ENCODE measurements at regions of chr13 and their contacts with region 1.

Region 1: GRCh38 chr13:46181840-46182490 is at the start of gene LCP1:
- DNase-seq: peak; percentile 69
- ATAC-seq: peak; percentile 73
- H3K4me3 Mint-ChIP-seq: peak within 1 kb of the TSS; percentile 98
- H3K27ac Mint-ChIP-seq: peak within 1 kb of the TSS; percentile 100
- H3K4me1 Mint-ChIP-seq: peaks cover 48% of the 10 kb centered on the region
- H3K27me3 Mint-ChIP-seq: no peaks in the 10 kb centered on the region
- total RNA-seq, gene LCP1: 965 to 1,009 TPM

Region 2: GRCh38 chr13:46146899-46147298 is 35.1 kb before region 1 on chr13:
- POLR2A ChIA-PET with region 1: no interaction called
- DNase-seq: no peak
- ATAC-seq: no peak
- H3K4me3 Mint-ChIP-seq: no peak overlapping the region
- H3K27ac Mint-ChIP-seq: peak overlapping the region; percentile 50
- H3K4me1 Mint-ChIP-seq: peaks cover 12% of the 10 kb centered on the region
- H3K27me3 Mint-ChIP-seq: no peaks in the 10 kb centered on the region

Region 3: DNA sequence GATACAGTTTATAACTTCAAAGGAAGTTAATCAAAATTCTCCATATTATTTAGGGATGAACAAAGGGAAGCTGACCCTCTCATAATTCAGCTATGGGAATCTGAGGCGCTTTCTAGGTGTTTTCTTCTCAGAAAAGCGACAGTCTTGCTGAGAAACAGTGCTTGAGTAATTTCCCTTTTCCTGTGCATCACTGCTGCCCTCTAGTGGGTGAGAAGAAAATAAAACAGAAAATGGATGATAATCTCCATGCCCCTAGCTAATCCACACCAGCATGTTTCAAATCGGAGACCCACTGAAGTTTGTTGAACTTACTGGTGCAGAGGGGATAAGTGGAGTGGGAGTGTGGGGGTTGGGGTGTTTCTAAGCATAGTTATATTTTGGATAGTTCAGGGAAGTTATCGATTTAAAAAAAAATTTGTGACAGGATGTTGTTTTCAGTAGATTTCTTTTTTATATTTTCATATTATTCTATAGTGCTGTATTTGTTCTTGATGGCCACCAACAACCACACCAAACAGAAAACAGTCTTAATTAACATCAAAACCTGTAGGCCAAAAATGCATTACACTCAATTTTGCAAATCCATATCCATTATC is 21.4 kb before region 1 on chr13:
- POLR2A ChIA-PET with region 1: interaction called, 11 read pairs
- DNase-seq: no peak
- ATAC-seq: peak; percentile 69
- H3K4me3 Mint-ChIP-seq: peak overlapping the region; percentile 71
- H3K27ac Mint-ChIP-seq: peak overlapping the region; percentile 85
- H3K4me1 Mint-ChIP-seq: peaks cover 48% of the 10 kb centered on the region
- H3K27me3 Mint-ChIP-seq: no peaks in the 10 kb centered on the region

Region 4: DNA sequence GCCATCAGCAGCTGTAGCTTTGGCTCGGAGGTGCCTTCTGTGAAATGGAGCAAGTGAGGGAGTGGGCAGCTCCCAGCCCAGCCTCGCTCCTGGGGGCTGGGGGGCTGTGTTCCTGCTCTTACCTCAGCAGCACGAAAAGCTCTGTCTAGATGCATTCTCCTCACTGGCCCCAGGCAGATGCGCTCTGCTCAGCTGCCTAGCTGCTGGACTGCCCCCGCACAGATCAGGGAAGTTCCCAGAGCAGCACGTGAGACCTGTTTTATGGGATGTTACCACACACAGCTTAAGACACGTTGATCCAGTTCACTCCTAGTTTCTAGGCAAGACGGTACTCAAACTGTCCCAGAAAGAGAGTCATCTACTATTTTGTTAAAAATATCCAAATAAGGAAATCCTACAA is 13.6 kb before region 1 on chr13:
- POLR2A ChIA-PET with region 1: interaction called, 134 read pairs
- DNase-seq: no peak
- ATAC-seq: no peak
- H3K4me3 Mint-ChIP-seq: peak overlapping the region; percentile 84
- H3K27ac Mint-ChIP-seq: peak overlapping the region; percentile 83
- H3K4me1 Mint-ChIP-seq: peaks cover 79% of the 10 kb centered on the region
- H3K27me3 Mint-ChIP-seq: no peaks in the 10 kb centered on the region

Region 5: DNA sequence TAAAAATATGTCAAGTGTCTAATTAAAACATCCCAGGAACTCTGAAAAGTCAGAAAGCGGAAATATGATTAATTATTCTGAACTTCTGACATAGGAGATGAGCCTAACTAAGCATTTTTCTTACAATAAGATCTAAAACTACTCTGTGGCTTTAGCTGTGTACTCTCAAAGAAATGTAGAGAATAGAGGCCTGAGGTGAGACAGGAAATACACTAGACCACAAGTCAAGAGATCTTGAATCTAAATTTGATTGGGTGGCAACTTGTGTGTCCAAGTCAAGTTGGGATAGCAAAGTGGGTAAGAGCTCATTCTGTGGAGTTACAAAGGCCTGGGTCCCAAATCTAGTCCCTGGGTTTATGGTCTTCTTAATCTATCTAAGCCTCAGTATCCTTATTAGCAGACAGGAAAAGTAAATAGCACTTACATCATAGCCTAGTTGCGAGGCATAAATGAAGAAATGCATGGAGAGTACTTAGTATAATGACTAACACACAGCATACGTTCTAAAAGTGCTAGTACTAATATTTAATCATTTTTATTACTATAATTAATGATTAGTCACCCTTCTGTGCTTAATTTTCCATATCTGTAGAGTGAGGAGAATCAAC is 20.3 kb after region 1 on chr13:
- POLR2A ChIA-PET with region 1: interaction called, 30 read pairs
- DNase-seq: no peak
- ATAC-seq: peak; percentile 86
- H3K4me3 Mint-ChIP-seq: peak overlapping the region; percentile 60
- H3K27ac Mint-ChIP-seq: peak overlapping the region; percentile 78
- H3K4me1 Mint-ChIP-seq: peaks cover 52% of the 10 kb centered on the region
- H3K27me3 Mint-ChIP-seq: no peaks in the 10 kb centered on the region

Region 6: GRCh38 chr13:46211483-46212351 is 29.8 kb after region 1 on chr13 and contains the start of gene LRRC63:
- POLR2A ChIA-PET with region 1: interaction called, 41 read pairs
- DNase-seq: peak; percentile 93
- ATAC-seq: peak; percentile 99
- H3K4me3 Mint-ChIP-seq: peak within 1 kb of the TSS; percentile 99
- H3K27ac Mint-ChIP-seq: peak within 1 kb of the TSS; percentile 98
- H3K4me1 Mint-ChIP-seq: peaks cover 24% of the 10 kb centered on the region
- H3K27me3 Mint-ChIP-seq: peaks cover 2% of the 10 kb centered on the region
- total RNA-seq, gene LRRC63: 1.5 to 1.6 TPM

Region 7: GRCh38 chr13:46267166-46267565 is 85.2 kb after region 1 on chr13:
- POLR2A ChIA-PET with region 1: no interaction called
- DNase-seq: no peak
- ATAC-seq: no peak
- H3K4me3 Mint-ChIP-seq: no peak overlapping the region
- H3K27ac Mint-ChIP-seq: no peak overlapping the region
- H3K4me1 Mint-ChIP-seq: no peaks in the 10 kb centered on the region
- H3K27me3 Mint-ChIP-seq: peaks cover 8% of the 10 kb centered on the region

Region 8: GRCh38 chr13:46295491-46296114 is 113.6 kb after region 1 on chr13:
- POLR2A ChIA-PET with region 1: interaction called, 19 read pairs
- DNase-seq: peak; percentile 48
- ATAC-seq: peak; percentile 90
- H3K4me3 Mint-ChIP-seq: peak overlapping the region; percentile 70
- H3K27ac Mint-ChIP-seq: peak overlapping the region; percentile 97
- H3K4me1 Mint-ChIP-seq: peaks cover 36% of the 10 kb centered on the region
- H3K27me3 Mint-ChIP-seq: no peaks in the 10 kb centered on the region